IMR-90 (cell line): ENCODE measurements at regions of chr1 and their contacts with region 1.

Region 1: GRCh38 chr1:223748773-223749733 is 36.7 kb downstream of the CAPN2 start:
- DNase-seq: peak; percentile 45
- ATAC-seq: peak; percentile 60
- H3K4me3 ChIP-seq: 0 out of 2 replicates have a peak overlapping the region, but pooled peaks have one; percentile 18
- H3K27ac ChIP-seq: peak overlapping the region; percentile 77
- H3K4me1 ChIP-seq: peaks cover 23% of the 10 kb centered on the region
- H3K27me3 ChIP-seq: no peaks in the 10 kb centered on the region
- CTCF ChIP-seq: peak; percentile 84
- POLR2A ChIP-seq: no peak
- RAD21 ChIP-seq: peak; percentile 81

Region 2: DNA sequence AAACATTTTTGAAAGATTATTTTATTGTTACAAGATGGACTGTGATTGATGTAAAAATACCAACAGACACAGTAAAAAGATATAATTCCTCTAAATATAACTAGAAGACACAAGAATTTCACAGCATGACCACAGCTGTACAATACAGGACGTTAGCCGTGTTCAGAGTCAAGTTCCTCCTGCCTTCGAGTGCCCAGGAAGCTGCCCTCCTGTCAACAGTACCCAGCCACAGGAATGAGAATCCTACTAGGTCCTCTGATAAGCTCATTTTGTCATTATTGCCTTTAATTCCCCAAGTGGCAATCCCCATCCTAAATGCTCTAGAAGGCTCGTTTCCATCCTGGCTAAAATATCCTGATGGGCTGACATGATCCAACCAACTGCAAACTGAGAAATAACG is 53.1 kb before region 1 on chr1:
- CTCF ChIA-PET with region 1: interaction called, 5 read pairs
- POLR2A ChIA-PET with region 1: interaction called, 3 read pairs
- dilution Hi-C with region 1: no loop called
- in situ Hi-C with region 1: loop called (anchors 5 kb)
- intact Hi-C with region 1: loop called (anchors 1 kb)
- DNase-seq: no peak
- ATAC-seq: no peak
- H3K4me3 ChIP-seq: no peak overlapping the region
- H3K27ac ChIP-seq: no peak overlapping the region
- H3K4me1 ChIP-seq: peaks cover 14% of the 10 kb centered on the region
- H3K27me3 ChIP-seq: no peaks in the 10 kb centered on the region
- CTCF ChIP-seq: no peak
- POLR2A ChIP-seq: no peak
- RAD21 ChIP-seq: no peak

Region 3: DNA sequence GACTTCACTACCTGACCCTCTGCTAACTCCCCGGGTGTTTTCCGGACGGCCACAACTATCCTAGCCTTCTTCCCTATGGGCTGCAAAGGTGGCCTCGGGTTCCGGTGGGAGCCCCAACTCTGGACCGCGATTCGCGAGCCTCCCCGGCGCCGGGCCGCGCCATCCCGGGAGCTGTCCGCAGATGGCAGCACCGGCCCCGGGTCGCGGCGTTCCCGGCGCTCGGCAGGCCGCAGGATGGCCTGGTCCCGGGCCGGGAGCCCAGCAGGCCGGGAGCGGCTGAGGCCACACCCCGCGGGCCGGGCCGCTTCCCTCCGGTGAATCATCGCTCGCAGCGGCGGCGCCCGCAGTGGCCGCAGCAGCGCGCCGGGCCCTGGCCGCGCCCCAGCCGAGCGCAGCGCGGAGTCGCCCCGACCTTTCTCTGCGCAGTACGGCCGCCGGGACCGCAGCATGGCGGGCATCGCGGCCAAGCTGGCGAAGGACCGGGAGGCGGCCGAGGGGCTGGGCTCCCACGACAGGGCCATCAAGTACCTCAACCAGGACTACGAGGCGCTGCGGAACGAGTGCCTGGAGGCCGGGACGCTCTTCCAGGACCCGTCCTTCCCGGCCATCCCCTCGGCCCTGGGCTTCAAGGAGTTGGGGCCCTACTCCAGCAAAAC is 36.7 kb before region 1 on chr1 and contains the start of gene CAPN2:
- CTCF ChIA-PET with region 1: interaction called, 21 read pairs
- POLR2A ChIA-PET with region 1: no interaction called
- dilution Hi-C with region 1: no loop called
- in situ Hi-C with region 1: no loop called
- intact Hi-C with region 1: loop called (anchors 1 kb)
- DNase-seq: peak; percentile 86
- ATAC-seq: peak; percentile 77
- H3K4me3 ChIP-seq: peak within 1 kb of the TSS; percentile 99
- H3K27ac ChIP-seq: peak within 1 kb of the TSS; percentile 99
- H3K4me1 ChIP-seq: peaks cover 33% of the 10 kb centered on the region
- H3K27me3 ChIP-seq: no peaks in the 10 kb centered on the region
- CTCF ChIP-seq: peak; percentile 83
- POLR2A ChIP-seq: peak; percentile 88
- RAD21 ChIP-seq: peak; percentile 78
- total RNA-seq, gene CAPN2: 430 and 460 TPM in 2 replicates

Region 4: DNA sequence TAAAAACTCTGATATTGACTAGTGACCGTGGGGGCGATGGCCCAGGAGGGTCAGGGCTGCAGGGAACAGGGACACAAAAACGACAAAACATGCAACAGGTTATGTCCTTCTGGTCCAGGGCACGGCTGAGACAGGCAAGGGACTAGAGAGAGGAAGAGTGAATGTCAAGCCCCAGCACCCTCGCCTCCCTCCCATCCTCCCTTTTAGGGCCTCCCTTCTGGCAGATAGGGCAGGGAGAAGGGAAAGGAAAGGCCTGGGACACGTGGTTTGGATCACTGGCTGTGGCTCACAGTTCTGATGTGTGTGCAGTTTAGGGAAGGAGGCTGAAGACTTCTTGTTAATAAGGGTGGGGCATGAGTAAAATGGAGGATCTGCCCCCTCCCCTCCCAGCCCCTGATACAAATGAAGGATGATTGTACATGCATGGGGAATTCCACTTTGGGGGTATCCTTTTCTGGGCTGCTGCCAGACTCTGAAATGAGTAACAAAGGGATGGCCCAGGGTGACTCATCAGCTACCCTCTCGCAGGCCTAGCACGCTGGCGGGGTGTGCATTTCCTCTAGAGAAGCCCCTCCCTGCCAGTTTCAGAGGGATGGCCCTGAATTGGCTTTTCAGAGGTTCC is 22.6 kb before region 1 on chr1:
- CTCF ChIA-PET with region 1: interaction called, 6 read pairs
- POLR2A ChIA-PET with region 1: no interaction called
- dilution Hi-C with region 1: no loop called
- in situ Hi-C with region 1: no loop called
- intact Hi-C with region 1: loop called (anchors 2 kb)
- DNase-seq: peak; percentile 98
- ATAC-seq: peak; percentile 58
- H3K4me3 ChIP-seq: no peak overlapping the region
- H3K27ac ChIP-seq: peak overlapping the region; percentile 87
- H3K4me1 ChIP-seq: peaks cover 46% of the 10 kb centered on the region
- H3K27me3 ChIP-seq: no peaks in the 10 kb centered on the region
- CTCF ChIP-seq: no peak
- POLR2A ChIP-seq: no peak
- RAD21 ChIP-seq: no peak

Region 5: DNA sequence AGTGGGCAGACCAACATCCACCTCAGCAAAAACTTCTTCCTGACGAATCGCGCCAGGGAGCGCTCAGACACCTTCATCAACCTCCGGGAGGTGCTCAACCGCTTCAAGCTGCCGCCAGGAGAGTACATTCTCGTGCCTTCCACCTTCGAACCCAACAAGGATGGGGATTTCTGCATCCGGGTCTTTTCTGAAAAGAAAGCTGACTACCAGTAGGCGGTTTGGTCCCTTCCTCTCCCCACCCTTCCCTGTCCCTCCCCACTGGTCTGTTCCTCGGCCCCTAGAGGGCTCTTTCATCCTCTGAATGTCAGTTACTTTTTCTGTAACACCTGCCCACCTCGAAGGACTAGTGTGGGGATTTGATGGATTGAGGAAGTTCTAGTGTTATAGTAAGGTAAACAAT is 10.2 kb after region 1 on chr1:
- CTCF ChIA-PET with region 1: interaction called, 16 read pairs
- POLR2A ChIA-PET with region 1: no interaction called
- dilution Hi-C with region 1: no loop called
- in situ Hi-C with region 1: no loop called
- intact Hi-C with region 1: no loop called
- DNase-seq: no peak
- ATAC-seq: no peak
- H3K4me3 ChIP-seq: no peak overlapping the region
- H3K27ac ChIP-seq: no peak overlapping the region
- H3K4me1 ChIP-seq: peaks cover 7% of the 10 kb centered on the region
- H3K27me3 ChIP-seq: no peaks in the 10 kb centered on the region
- CTCF ChIP-seq: no peak
- POLR2A ChIP-seq: no peak
- RAD21 ChIP-seq: no peak